Lower leg skin (tissue), 4 donors: ENCODE measurements at regions of chr12 and their contacts with region 1.

Region 1: DNA sequence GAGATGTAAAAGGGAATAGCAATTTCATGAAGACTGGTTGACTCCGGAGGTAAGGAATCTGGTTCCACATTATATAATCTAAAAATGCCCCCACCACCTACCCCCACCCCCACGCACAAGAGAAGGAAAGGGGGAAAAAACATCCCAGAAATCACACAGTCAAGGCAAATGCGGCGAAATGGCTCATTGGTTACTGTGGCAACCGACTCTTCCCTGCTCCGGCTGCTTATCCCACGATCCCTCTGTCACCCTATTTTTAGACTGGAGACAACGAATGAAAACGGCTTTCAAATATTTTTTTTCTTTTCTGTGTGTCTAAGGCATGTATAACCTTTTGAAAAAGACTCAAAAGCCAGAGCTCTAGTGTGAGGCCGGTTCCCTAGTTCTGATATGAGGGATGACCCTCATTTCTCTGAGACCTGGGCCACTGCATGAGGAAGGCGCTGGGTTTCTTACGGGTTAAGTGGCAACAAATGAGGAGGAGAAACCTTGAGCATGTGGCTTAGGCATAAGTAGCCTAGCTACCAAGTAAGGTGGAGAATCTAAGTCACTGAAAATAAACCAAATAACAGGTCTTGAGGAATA is 148.3 kb upstream of the GRIN2B start:
- DNase-seq: no peak
- H3K4me3 ChIP-seq: no peak overlapping the region
- CTCF ChIP-seq: no peak
- POLR2A ChIP-seq: no peak

Region 2: DNA sequence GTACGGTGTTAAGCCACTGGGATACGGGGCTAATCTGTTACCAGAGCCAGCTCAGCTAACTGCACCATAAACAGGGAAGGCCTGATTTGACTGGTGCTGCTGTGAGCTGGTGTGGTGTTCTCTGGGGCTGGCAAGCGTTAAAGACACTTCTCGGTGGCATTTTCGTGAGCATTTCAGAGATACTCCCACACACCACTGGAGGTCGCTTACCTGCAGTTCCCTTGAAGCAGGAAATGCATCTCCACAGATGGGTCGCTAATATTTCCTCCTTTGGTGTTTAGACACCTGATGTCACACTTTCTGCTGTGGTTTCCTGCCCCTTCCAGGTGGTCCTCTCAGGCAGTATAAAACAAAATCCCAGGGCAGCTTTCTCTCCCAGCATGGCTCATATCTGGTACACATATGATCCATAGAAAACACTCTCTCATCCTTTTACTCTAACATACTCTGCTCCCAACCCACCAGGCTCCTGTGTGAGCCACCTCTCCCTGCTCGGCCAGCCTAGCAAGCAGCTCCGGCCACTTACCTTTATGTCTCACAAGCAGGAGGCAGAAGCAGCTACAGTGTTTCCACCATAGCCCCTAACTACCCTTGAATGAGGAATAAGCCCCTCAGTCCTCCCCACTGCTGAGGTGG is 18.4 kb before region 1 on chr12:
- intact Hi-C with region 1: loop called (anchors 2 kb)
- DNase-seq: no peak
- H3K4me3 ChIP-seq: no peak overlapping the region
- CTCF ChIP-seq: no peak
- POLR2A ChIP-seq: no peak

Region 3: DNA sequence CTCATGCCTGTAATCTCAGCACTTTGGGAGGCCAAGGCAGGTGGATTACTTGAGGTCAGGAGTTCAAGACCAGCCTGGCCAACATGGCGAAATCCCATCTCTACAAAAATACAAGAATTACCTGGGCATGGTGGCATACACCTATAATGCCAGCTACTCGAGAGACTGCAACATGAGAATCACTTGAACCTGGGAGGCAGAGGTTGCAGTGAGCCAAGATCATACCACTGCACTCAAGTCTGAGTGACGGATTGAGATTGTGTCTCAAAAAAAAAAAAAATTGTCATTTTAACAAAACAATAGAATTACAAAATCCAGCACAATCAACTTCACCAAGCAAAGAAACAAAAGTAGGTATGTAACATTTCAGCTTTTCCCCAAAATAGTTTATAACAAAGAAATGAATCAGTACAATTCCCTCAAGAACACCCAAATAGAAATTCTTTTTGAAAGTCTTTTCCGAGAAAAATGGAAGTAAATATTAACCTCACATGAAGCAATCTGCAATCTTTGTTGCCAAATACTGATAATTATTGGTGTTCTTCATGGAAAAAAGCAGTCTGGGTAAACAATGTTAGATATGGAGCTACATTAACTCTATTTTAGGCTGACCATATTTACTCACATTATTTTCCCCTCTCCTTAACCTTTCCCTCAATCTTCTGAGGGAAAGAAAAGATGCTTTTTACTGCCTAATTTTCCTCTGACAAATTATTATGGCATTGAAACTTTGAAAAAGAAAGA is 69.9 kb after region 1 on chr12:
- intact Hi-C with region 1: no loop called
- DNase-seq: no peak
- H3K4me3 ChIP-seq: no peak overlapping the region
- CTCF ChIP-seq: no peak
- POLR2A ChIP-seq: no peak